Activated CD8-positive, alpha-beta T cell treated with anti-CD3 and anti-CD28 coated beads for 36 hours (primary cell): ENCODE measurements at regions of chr4 and their contacts with region 1.

Region 1: GRCh38 chr4:71270901-71271300 is 67.9 kb upstream of the SLC4A4 start:
- DNase-seq: peak; percentile 52
- ATAC-seq: peak; percentile 42
- H3K4me3 Mint-ChIP-seq: no peak overlapping the region
- H3K27ac Mint-ChIP-seq: no peak overlapping the region
- H3K4me1 Mint-ChIP-seq: peaks cover 14% of the 10 kb centered on the region
- H3K27me3 Mint-ChIP-seq: no peaks in the 10 kb centered on the region
- CTCF ChIP-seq: peak; percentile 56

Region 2: GRCh38 chr4:71147261-71147660 is 123.6 kb before region 1 on chr4:
- CTCF ChIA-PET with region 1: no interaction called
- POLR2A ChIA-PET with region 1: no interaction called
- intact Hi-C with region 1: no loop called
- DNase-seq: no peak
- ATAC-seq: no peak
- H3K4me3 Mint-ChIP-seq: no peak overlapping the region
- H3K27ac Mint-ChIP-seq: no peak overlapping the region
- H3K4me1 Mint-ChIP-seq: no peaks in the 10 kb centered on the region
- H3K27me3 Mint-ChIP-seq: peaks cover 2% of the 10 kb centered on the region
- CTCF ChIP-seq: no peak

Region 3: GRCh38 chr4:71322425-71322824 is 51.5 kb after region 1 on chr4:
- CTCF ChIA-PET with region 1: no interaction called
- POLR2A ChIA-PET with region 1: no interaction called
- intact Hi-C with region 1: no loop called
- DNase-seq: no peak
- ATAC-seq: no peak
- H3K4me3 Mint-ChIP-seq: no peak overlapping the region
- H3K27ac Mint-ChIP-seq: no peak overlapping the region
- H3K4me1 Mint-ChIP-seq: no peaks in the 10 kb centered on the region
- H3K27me3 Mint-ChIP-seq: no peaks in the 10 kb centered on the region
- CTCF ChIP-seq: no peak

Region 4: DNA sequence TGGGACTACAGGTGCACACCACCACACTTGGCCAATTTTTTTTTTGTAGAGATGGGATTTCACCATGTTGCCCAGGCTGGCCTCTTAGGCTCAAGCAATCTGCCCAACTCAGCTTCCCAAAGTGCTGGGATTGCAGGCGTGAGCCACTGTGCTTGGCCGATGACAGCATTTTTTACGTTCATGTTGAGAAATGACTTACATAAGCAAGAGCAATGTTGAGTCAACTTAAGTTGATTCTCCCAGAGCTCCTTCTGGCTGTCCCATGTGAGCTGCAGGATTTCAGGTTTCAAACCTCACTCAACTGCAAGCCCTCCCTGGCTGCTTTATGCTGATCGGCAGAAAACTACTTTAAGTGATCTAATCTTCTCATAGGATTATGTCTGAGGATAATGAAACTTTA is 426.1 kb after region 1 on chr4:
- CTCF ChIA-PET with region 1: no interaction called
- POLR2A ChIA-PET with region 1: no interaction called
- intact Hi-C with region 1: no loop called
- DNase-seq: no peak
- ATAC-seq: no peak
- H3K4me3 Mint-ChIP-seq: no peak overlapping the region
- H3K27ac Mint-ChIP-seq: no peak overlapping the region
- H3K4me1 Mint-ChIP-seq: no peaks in the 10 kb centered on the region
- H3K27me3 Mint-ChIP-seq: peaks cover 5% of the 10 kb centered on the region
- CTCF ChIP-seq: no peak

Region 5: GRCh38 chr4:71713611-71714203 is 442.8 kb after region 1 on chr4:
- CTCF ChIA-PET with region 1: interaction called, 16 read pairs
- POLR2A ChIA-PET with region 1: no interaction called
- intact Hi-C with region 1: no loop called
- DNase-seq: no peak
- ATAC-seq: no peak
- H3K4me3 Mint-ChIP-seq: no peak overlapping the region
- H3K27ac Mint-ChIP-seq: no peak overlapping the region
- H3K4me1 Mint-ChIP-seq: no peaks in the 10 kb centered on the region
- H3K27me3 Mint-ChIP-seq: no peaks in the 10 kb centered on the region
- CTCF ChIP-seq: peak; percentile 59